Activated CD4-positive, alpha-beta T cell treated with anti-CD3 and anti-CD28 coated beads for 36 hours (primary cell): ENCODE measurements at regions of chr1 and their contacts with region 1.

Region 1: GRCh38 chr1:40315239-40315794 is 1.8 kb downstream of the COL9A2 start:
- DNase-seq: peak; percentile 92
- ATAC-seq: peak; percentile 74
- H3K4me3 Mint-ChIP-seq: peak overlapping the region; percentile 72
- H3K27ac Mint-ChIP-seq: peak overlapping the region; percentile 77
- H3K4me1 Mint-ChIP-seq: peaks cover 42% of the 10 kb centered on the region
- H3K27me3 Mint-ChIP-seq: peaks cover 14% of the 10 kb centered on the region

Region 2: GRCh38 chr1:40081871-40082270 is 233.4 kb before region 1 on chr1:
- CTCF ChIA-PET with region 1: no interaction called
- POLR2A ChIA-PET with region 1: no interaction called
- intact Hi-C with region 1: no loop called
- DNase-seq: no peak
- ATAC-seq: no peak
- H3K4me3 Mint-ChIP-seq: no peak overlapping the region
- H3K27ac Mint-ChIP-seq: no peak overlapping the region
- H3K4me1 Mint-ChIP-seq: peaks cover 11% of the 10 kb centered on the region
- H3K27me3 Mint-ChIP-seq: no peaks in the 10 kb centered on the region

Region 3: DNA sequence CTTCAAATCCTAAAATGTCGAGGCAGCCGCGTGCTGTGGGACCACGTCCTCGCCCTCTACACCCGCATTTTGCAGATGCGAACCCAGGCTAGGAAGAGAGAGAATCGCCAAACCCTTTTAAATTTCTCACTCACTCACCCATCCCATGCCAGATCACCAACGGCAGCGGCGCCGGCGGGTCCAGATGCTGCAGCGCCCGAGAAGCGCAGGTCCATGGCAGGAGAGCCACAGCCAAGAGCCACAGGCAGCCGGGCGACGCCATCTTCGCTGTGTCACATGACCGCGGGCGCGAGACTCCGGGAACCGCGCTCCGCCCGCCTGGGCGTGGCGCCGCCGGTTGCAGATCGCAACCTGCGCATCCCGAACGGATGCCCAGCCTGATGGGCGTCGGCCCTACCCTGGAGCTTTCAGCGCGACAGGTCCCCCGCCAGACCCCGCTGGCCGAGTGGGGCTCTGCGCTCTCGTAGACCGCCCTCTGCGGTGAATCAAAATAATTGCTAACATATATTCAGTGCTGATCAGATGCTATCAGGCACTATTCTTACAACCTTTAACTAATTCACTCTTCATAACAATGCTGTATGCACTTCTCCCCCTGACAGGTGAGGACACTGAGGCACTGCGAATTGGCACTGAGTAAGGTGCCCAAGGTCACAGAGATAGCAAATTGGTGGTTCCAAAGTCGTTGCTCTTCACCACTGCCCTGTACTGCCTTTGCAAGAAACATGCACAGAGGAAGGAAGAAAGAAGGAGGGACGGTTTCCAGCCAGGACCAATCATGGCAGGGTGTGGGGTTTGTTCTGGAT is 218.1 kb before region 1 on chr1 and contains the start of gene PPT1:
- CTCF ChIA-PET with region 1: interaction called, 3 read pairs
- POLR2A ChIA-PET with region 1: no interaction called
- intact Hi-C with region 1: loop called in 1 of 2 experiments (anchors 1 kb)
- DNase-seq: peak; percentile 91
- ATAC-seq: peak; percentile 96
- H3K4me3 Mint-ChIP-seq: peak within 1 kb of the TSS; percentile 90
- H3K27ac Mint-ChIP-seq: peak within 1 kb of the TSS; percentile 91
- H3K4me1 Mint-ChIP-seq: peaks cover 37% of the 10 kb centered on the region
- H3K27me3 Mint-ChIP-seq: peaks cover 4% of the 10 kb centered on the region
- total RNA-seq, gene PPT1: 75.4 to 77.4 TPM

Region 4: GRCh38 chr1:40153073-40153770 is 162.1 kb before region 1 on chr1:
- CTCF ChIA-PET with region 1: interaction called, 52 read pairs
- POLR2A ChIA-PET with region 1: no interaction called
- intact Hi-C with region 1: loop called (anchors 1 kb)
- DNase-seq: peak; percentile 40
- ATAC-seq: peak; percentile 72
- H3K4me3 Mint-ChIP-seq: no peak overlapping the region
- H3K27ac Mint-ChIP-seq: peak overlapping the region; percentile 48
- H3K4me1 Mint-ChIP-seq: peaks cover 7% of the 10 kb centered on the region
- H3K27me3 Mint-ChIP-seq: peaks cover 3% of the 10 kb centered on the region

Region 5: GRCh38 chr1:40241362-40241761 is 74.0 kb before region 1 on chr1:
- CTCF ChIA-PET with region 1: interaction called, 6 read pairs
- POLR2A ChIA-PET with region 1: no interaction called
- intact Hi-C with region 1: loop called in 1 of 2 experiments (anchors 5 kb)
- DNase-seq: no peak
- ATAC-seq: peak; percentile 62
- H3K4me3 Mint-ChIP-seq: peak overlapping the region; percentile 6
- H3K27ac Mint-ChIP-seq: peak overlapping the region; percentile 81
- H3K4me1 Mint-ChIP-seq: peaks cover 52% of the 10 kb centered on the region
- H3K27me3 Mint-ChIP-seq: peaks cover 3% of the 10 kb centered on the region

Region 6: GRCh38 chr1:40264354-40264781 is 50.9 kb before region 1 on chr1:
- CTCF ChIA-PET with region 1: interaction called, 12 read pairs
- POLR2A ChIA-PET with region 1: no interaction called
- intact Hi-C with region 1: loop called in 1 of 2 experiments (anchors 2 kb)
- DNase-seq: peak; percentile 48
- ATAC-seq: peak; percentile 94
- H3K4me3 Mint-ChIP-seq: no peak overlapping the region
- H3K27ac Mint-ChIP-seq: peak overlapping the region; percentile 91
- H3K4me1 Mint-ChIP-seq: peaks cover 62% of the 10 kb centered on the region
- H3K27me3 Mint-ChIP-seq: no peaks in the 10 kb centered on the region

Region 7: DNA sequence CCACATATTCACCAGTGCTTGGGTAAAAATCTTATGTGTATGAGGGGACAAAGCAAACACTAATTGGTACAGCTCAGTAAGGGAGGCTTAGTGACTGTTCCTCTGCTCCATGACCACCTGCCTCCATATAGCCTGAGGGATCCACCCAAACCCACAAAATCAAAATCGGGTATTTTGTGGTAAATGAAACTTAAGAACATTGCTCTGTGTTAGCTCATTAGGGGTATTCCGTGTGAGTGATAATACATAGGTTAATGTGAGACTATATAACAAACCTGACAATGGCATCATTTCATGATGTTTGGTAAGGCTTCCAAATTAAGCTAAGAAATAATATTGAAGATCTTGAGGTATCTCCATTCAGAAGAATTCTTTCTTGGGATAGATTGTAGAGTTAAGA is 24.0 kb before region 1 on chr1:
- CTCF ChIA-PET with region 1: interaction called, 11 read pairs
- POLR2A ChIA-PET with region 1: no interaction called
- intact Hi-C with region 1: no loop called
- DNase-seq: no peak
- ATAC-seq: no peak
- H3K4me3 Mint-ChIP-seq: no peak overlapping the region
- H3K27ac Mint-ChIP-seq: peak overlapping the region; percentile 35
- H3K4me1 Mint-ChIP-seq: no peaks in the 10 kb centered on the region
- H3K27me3 Mint-ChIP-seq: no peaks in the 10 kb centered on the region

Region 8: GRCh38 chr1:40404670-40405462 is 89.5 kb after region 1 on chr1:
- CTCF ChIA-PET with region 1: interaction called, 33 read pairs
- POLR2A ChIA-PET with region 1: no interaction called
- intact Hi-C with region 1: loop called in 1 of 2 experiments (anchors 1 kb)
- DNase-seq: peak; percentile 61
- ATAC-seq: peak; percentile 34
- H3K4me3 Mint-ChIP-seq: peak overlapping the region; percentile 3
- H3K27ac Mint-ChIP-seq: peak overlapping the region; percentile 91
- H3K4me1 Mint-ChIP-seq: peaks cover 64% of the 10 kb centered on the region
- H3K27me3 Mint-ChIP-seq: no peaks in the 10 kb centered on the region